ENCODE measurements at regions of chr1 and their contacts with region 1.

Region 1: GRCh38 chr1:110024613-110025012 is 9.8 kb upstream of the STRIP1 start:
- DNase-seq: no peak
- H3K4me3 ChIP-seq: no peak overlapping the region
- H3K27ac ChIP-seq: no peak overlapping the region
- H3K4me1 ChIP-seq: no peaks in the 10 kb centered on the region
- H3K27me3 ChIP-seq: no peaks in the 10 kb centered on the region
- CTCF ChIP-seq: no peak
- EP300 ChIP-seq: no peak
- POLR2A ChIP-seq: no peak
- RAD21 ChIP-seq: no peak

Region 2: GRCh38 chr1:109895720-109896504 is 128.7 kb before region 1 on chr1:
- CTCF ChIA-PET with region 1: no interaction called
- POLR2A ChIA-PET with region 1: no interaction called
- DNase-seq: no peak
- H3K4me3 ChIP-seq: no peak overlapping the region
- H3K27ac ChIP-seq: no peak overlapping the region
- H3K4me1 ChIP-seq: peaks cover 0 to 3% (median 0%) of the 10 kb centered on the region in 4 experiments; a peak in 2 of 7 replicates
- H3K27me3 ChIP-seq: no peaks in the 10 kb centered on the region; a peak in 1 of 7 replicates
- CTCF ChIP-seq: no peak
- EP300 ChIP-seq: no peak
- POLR2A ChIP-seq: no peak
- RAD21 ChIP-seq: no peak

Region 3: DNA sequence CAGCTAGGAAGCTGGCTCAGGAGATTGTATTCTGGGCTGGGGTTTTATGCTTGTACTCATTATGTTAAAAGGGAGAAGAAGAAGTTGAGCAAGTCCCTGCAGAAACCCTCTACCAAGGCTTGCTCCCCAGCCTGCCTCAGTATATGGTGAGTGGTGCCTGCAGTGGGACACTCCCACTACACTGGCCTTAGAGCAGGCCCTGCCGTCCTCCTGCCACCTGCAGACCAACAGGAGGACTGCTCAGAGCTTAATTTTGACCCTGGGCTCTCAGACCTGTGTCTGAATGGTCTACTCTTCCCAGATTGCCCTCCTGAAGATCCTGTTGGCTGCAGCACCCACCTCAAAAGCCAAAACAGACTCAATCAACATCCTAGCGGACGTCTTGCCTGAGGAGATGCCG is 22.9 kb after region 1 on chr1:
- CTCF ChIA-PET with region 1: interaction called, 11 read pairs
- POLR2A ChIA-PET with region 1: interaction called, 3 read pairs
- DNase-seq: no peak
- H3K4me3 ChIP-seq: no peak overlapping the region
- H3K27ac ChIP-seq: no peak overlapping the region
- H3K4me1 ChIP-seq: no peaks in the 10 kb centered on the region
- H3K27me3 ChIP-seq: no peaks in the 10 kb centered on the region
- CTCF ChIP-seq: peak in 2 of 3 experiments; percentile 28 to 29; a peak in 3 of 4 replicates
- EP300 ChIP-seq: no peak
- POLR2A ChIP-seq: no peak
- RAD21 ChIP-seq: 0 out of 4 replicates have a peak, but pooled peaks of 1 of the 2 experiments have one; percentile 2

Region 4: DNA sequence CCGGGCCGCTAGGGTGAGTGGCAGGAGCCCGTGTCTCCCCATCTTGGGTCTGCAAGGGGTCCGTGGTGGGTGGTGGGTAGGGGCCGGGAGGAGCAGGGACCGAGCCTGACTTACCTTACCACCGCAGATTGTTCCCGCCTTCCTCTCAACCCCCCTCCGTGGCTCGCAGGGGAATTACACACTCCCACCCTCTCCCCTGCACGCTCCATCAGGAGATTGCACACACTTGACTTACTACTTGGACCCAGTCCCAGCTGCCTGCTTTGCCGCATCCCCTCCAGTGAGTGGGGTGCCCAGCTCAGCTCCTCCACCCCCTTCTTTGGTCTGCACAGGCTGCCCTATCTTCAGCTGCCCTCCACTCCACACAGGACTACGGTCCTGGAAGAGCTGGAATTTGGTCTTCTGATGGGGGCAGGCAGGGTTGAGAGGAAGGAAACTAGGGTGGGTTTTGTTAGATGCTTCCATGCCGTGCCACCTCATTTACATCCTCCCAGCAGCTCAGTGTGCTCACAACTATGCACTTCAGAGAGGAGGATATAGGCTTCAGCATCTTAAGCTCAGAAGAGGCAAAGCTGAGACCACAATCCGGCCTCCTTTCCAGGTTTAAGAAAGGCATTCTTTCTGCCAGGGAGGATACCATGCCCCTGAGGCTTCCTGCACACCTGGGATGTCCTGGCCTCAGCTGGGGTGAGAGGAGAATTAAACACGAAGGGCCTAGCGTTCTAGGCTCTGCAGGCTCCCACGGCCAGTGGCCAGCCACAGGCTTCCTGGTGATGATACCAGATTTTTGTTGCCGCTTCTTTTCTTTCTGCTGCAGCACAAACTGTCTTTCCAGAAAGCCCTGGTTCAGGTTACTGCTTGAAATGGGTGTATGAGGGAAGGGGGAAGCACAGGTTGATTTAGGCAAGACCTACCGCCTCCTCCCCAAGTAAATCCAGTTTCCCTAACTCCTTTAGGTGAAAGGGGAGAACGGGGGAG is 187.8 kb after region 1 on chr1:
- CTCF ChIA-PET with region 1: no interaction called
- POLR2A ChIA-PET with region 1: no interaction called
- DNase-seq: peak in 1 of 2 experiments; percentile 57
- H3K4me3 ChIP-seq: peak overlapping the region; percentile 41 to 78 (median 56); a peak in 7 of 8 replicates
- H3K27ac ChIP-seq: no peak overlapping the region
- H3K4me1 ChIP-seq: peaks cover 7 to 23% (median 20%) of the 10 kb centered on the region in 4 experiments
- H3K27me3 ChIP-seq: peaks cover 5 to 22% (median 21%) of the 10 kb centered on the region in 4 experiments
- CTCF ChIP-seq: no peak
- EP300 ChIP-seq: no peak
- POLR2A ChIP-seq: no peak
- RAD21 ChIP-seq: no peak

Measured in H1 (cell line).